ENCODE measurements at regions of chr5 and their contacts with region 1.

Region 1: GRCh38 chr5:55159763-55160492 is at the start of gene GPX8:
- DNase-seq: no peak
- ATAC-seq: peak; percentile 86 to 92 (median 89)
- H3K4me3 ChIP-seq: peak within 1 kb of the TSS; percentile 8 to 15 (median 9)
- H3K27ac ChIP-seq: no peak within 1 kb of the TSS
- H3K4me1 ChIP-seq: no peaks in the 10 kb centered on the region
- H3K27me3 ChIP-seq: no peaks in the 10 kb centered on the region
- CTCF ChIP-seq: peak; percentile 47 to 55 (median 54)
- POLR2A ChIP-seq: no peak
- total RNA-seq, gene GPX8: 0.24 to 3.2 (median 1.4) TPM

Region 2: GRCh38 chr5:54905943-54906537 is 253.9 kb before region 1 on chr5:
- intact Hi-C with region 1: loop called (anchors 10 kb)
- DNase-seq: peak in 2 of 3 donors; percentile 49 to 54
- ATAC-seq: peak; percentile 52 to 69 (median 62)
- H3K4me3 ChIP-seq: no peak overlapping the region
- H3K27ac ChIP-seq: no peak overlapping the region
- H3K4me1 ChIP-seq: no peaks in the 10 kb centered on the region
- H3K27me3 ChIP-seq: no peaks in the 10 kb centered on the region
- CTCF ChIP-seq: peak; percentile 58 to 75 (median 62)
- POLR2A ChIP-seq: no peak

Region 3: DNA sequence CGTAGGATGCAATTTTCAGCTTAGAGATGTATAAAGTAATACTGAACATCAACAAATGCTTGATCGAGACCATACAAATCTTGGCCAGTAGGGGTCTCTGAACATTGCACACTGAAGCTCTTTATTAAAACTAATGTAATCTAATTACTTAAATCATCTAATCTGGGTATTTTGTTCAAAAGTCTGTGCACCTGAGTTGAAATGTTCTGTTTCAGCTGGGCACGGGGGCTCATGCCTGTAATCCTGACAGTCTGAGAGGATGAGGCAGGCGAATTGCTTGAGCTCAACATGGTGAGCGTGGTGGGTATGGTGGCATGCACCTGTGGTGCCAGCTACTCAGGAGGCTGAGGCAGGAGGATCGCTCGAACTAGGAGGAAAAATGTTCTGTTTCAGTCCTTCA is 215.6 kb before region 1 on chr5:
- intact Hi-C with region 1: loop called in 1 of 2 experiments (anchors 10 kb)
- DNase-seq: no peak
- ATAC-seq: peak; percentile 64 to 76 (median 74)
- H3K4me3 ChIP-seq: no peak overlapping the region
- H3K27ac ChIP-seq: no peak overlapping the region
- H3K4me1 ChIP-seq: no peaks in the 10 kb centered on the region
- H3K27me3 ChIP-seq: no peaks in the 10 kb centered on the region
- CTCF ChIP-seq: peak; percentile 58 to 73 (median 66)
- POLR2A ChIP-seq: no peak

Region 4: DNA sequence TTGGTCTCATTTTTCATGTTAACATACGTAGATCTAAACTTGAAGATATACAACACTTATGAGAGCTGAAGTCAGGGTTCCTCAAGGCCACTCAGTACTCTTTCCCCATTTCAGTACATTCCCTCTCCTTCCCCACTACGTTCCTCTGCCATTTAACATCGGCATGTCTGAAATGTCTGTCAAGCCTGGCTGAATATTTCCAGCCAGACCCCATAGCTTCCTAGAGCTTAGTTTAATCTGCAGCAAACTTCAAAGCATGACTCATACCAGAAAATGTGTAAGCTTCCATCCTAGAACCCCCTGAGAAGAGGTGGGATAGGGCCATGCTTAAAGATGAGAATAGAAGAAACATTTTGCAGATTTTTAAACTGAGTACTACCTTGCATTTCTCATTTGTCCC is 51.3 kb before region 1 on chr5:
- intact Hi-C with region 1: no loop called
- DNase-seq: no peak
- ATAC-seq: no peak
- H3K4me3 ChIP-seq: no peak overlapping the region
- H3K27ac ChIP-seq: no peak overlapping the region
- H3K4me1 ChIP-seq: no peaks in the 10 kb centered on the region
- H3K27me3 ChIP-seq: no peaks in the 10 kb centered on the region
- CTCF ChIP-seq: no peak
- POLR2A ChIP-seq: no peak